ENCODE measurements at regions of chr11 and their contacts with region 1.

Region 1: GRCh38 chr11:95150946-95151684 is 61.5 kb downstream of the ENDOD1 start:
- DNase-seq: peak; percentile 98
- ATAC-seq: peak; percentile 68
- H3K4me3 ChIP-seq: peak overlapping the region; percentile 71
- H3K27ac ChIP-seq: peak overlapping the region; percentile 60
- H3K4me1 ChIP-seq: peaks cover 44% of the 10 kb centered on the region
- H3K27me3 ChIP-seq: no peaks in the 10 kb centered on the region
- CTCF ChIP-seq: peak; percentile 60

Region 2: GRCh38 chr11:94731880-94732601 is 419.1 kb before region 1 on chr11:
- CTCF ChIA-PET with region 1: no interaction called
- POLR2A ChIA-PET with region 1: no interaction called
- intact Hi-C with region 1: no loop called
- DNase-seq: peak; percentile 90
- ATAC-seq: peak; percentile 59
- H3K4me3 ChIP-seq: peak overlapping the region; percentile 4; the same call in 1 of the 2 replicates
- H3K27ac ChIP-seq: peak overlapping the region; percentile 96
- H3K4me1 ChIP-seq: peaks cover 90% of the 10 kb centered on the region
- H3K27me3 ChIP-seq: no peaks in the 10 kb centered on the region
- CTCF ChIP-seq: no peak

Region 3: DNA sequence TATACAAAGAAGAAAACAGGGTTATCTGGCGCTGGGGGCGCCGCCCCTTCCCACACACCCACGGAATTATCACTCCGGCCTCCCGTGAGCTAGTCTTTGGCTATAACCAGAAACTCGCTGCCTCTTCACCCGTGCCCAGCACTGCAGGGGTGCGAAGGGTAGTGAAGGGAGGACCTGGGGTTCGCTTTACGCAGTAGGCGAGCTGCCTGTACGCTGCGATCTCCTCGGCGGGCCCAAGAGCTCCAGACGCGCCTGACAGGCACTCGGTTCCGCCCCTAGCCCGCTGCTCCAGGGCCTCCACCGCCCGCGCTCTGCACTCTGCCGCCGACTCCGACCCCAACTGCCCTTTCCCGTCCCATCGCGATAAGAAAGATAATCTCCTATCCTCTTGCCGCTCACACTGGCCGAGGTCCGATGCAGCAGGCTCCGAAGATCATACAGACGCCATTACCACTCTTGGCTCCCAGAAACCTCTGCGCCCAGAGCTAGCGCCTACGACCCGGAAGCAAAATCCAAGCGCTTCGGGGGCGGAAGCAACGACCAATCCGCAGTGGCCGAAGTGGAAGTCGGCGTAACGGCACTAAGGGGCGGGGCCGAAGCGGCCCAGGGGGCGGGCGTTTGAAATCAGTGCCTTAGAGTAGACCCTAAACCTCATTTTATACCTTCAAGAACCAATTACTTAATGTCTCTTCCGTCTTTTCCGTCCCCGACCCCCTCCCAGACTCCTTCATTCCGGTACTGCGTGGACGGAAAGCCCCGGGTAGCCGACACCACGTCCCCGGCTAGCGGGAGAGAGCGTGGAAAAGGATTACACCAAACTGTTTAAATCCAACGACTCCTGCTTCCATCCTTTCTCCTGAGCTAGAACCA is 177.8 kb before region 1 on chr11 and contains the starts of genes CWC15 and KDM4D:
- CTCF ChIA-PET with region 1: interaction called, 3 read pairs
- POLR2A ChIA-PET with region 1: no interaction called
- intact Hi-C with region 1: loop called (anchors 1 kb)
- DNase-seq: peak; percentile 98
- ATAC-seq: peak; percentile 99
- H3K4me3 ChIP-seq: peak within 1 kb of the TSS; percentile 83
- H3K27ac ChIP-seq: peak within 1 kb of the TSS; percentile 13; the same call in 1 of the 2 replicates
- H3K4me1 ChIP-seq: peaks cover 21% of the 10 kb centered on the region
- H3K27me3 ChIP-seq: no peaks in the 10 kb centered on the region
- CTCF ChIP-seq: no peak
- total RNA-seq, gene CWC15: 56.9 and 63.5 TPM in 2 replicates
- total RNA-seq, gene KDM4D: 2.7 and 4.1 TPM in 2 replicates

Region 4: GRCh38 chr11:95089620-95090542 is 61.2 kb before region 1 on chr11 and contains the start of gene ENDOD1:
- CTCF ChIA-PET with region 1: no interaction called
- POLR2A ChIA-PET with region 1: no interaction called
- intact Hi-C with region 1: loop called (anchors 1 kb)
- DNase-seq: peak; percentile 90
- ATAC-seq: peak; percentile 93
- H3K4me3 ChIP-seq: peak within 1 kb of the TSS; percentile 89
- H3K27ac ChIP-seq: no peak within 1 kb of the TSS
- H3K4me1 ChIP-seq: peaks cover 36% of the 10 kb centered on the region
- H3K27me3 ChIP-seq: no peaks in the 10 kb centered on the region
- CTCF ChIP-seq: peak; percentile 32; the same call in 1 of the 2 replicates
- total RNA-seq, gene ENDOD1: 28.5 and 32.1 TPM in 2 replicates

Region 5: GRCh38 chr11:95108159-95108611 is 42.9 kb before region 1 on chr11:
- CTCF ChIA-PET with region 1: interaction called, 3 read pairs
- POLR2A ChIA-PET with region 1: no interaction called
- intact Hi-C with region 1: loop called (anchors 1 kb)
- DNase-seq: peak; percentile 90
- ATAC-seq: peak; percentile 93
- H3K4me3 ChIP-seq: peak overlapping the region; percentile 58
- H3K27ac ChIP-seq: peak overlapping the region; percentile 84
- H3K4me1 ChIP-seq: peaks cover 30% of the 10 kb centered on the region
- H3K27me3 ChIP-seq: no peaks in the 10 kb centered on the region
- CTCF ChIP-seq: no peak

Region 6: GRCh38 chr11:95705485-95706124 is 554.5 kb after region 1 on chr11:
- CTCF ChIA-PET with region 1: interaction called, 26 read pairs
- POLR2A ChIA-PET with region 1: no interaction called
- intact Hi-C with region 1: loop called (anchors 1 kb)
- DNase-seq: peak; percentile 87
- ATAC-seq: peak; percentile 89
- H3K4me3 ChIP-seq: no peak overlapping the region
- H3K27ac ChIP-seq: no peak overlapping the region
- H3K4me1 ChIP-seq: no peaks in the 10 kb centered on the region
- H3K27me3 ChIP-seq: peaks cover 61% of the 10 kb centered on the region
- CTCF ChIP-seq: peak; percentile 97

Region 7: DNA sequence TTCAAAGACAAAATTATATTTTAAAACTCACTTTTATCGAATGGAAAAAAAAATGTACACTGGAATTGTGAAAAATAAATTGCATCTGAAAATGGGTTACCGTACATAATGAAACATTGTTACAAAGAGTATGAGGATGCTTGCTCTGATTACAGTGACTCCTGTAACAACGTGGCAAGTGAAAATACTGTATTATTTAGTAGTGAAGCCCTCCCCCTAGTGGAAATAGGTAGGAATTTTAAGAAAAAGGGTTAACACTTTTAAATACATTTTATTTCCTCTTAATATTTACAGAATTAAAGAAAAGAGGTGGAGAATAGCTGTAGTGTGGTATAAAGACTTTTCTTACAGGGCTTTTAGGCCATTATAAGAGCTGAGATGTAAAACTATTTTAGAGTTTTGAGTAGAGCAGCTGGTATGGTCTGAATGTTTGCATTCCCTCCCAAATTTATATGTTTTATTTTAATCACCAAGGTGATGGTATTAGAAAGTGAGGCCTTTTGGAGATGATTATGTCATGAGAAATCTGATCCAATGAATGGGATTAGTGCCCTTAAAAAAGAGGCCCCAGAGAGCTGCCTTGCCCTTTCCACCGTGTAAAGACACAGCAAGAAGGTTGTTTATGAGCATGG is 613.3 kb after region 1 on chr11:
- CTCF ChIA-PET with region 1: interaction called, 4 read pairs
- POLR2A ChIA-PET with region 1: no interaction called
- intact Hi-C with region 1: loop called (anchors 1 kb)
- DNase-seq: peak; percentile 76
- ATAC-seq: peak; percentile 85
- H3K4me3 ChIP-seq: no peak overlapping the region
- H3K27ac ChIP-seq: no peak overlapping the region
- H3K4me1 ChIP-seq: no peaks in the 10 kb centered on the region
- H3K27me3 ChIP-seq: peaks cover 23% of the 10 kb centered on the region
- CTCF ChIP-seq: peak; percentile 86

Region 8: DNA sequence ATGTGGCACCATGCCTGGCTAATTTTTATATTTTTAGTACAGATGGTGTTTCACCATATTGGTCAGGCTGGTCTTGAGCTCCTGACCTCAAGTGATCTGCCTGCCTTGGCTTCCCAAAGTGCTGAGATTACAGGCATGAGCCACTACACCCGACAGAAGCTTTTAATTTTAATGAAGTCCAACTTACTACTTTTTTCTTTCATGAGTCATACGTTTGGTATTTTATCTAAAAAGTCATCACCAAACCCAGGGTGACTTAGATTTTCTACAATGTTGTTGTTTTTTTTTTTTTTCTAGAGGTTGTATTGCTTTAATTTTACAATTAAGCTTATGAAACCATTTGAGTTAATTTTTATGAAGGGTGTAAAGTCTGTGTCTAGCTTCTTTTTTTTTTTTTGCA is 1273.6 kb after region 1 on chr11:
- CTCF ChIA-PET with region 1: interaction called, 4 read pairs
- POLR2A ChIA-PET with region 1: no interaction called
- intact Hi-C with region 1: loop called (anchors 1 kb)
- DNase-seq: peak; percentile 61
- ATAC-seq: no peak
- H3K4me3 ChIP-seq: no peak overlapping the region
- H3K27ac ChIP-seq: no peak overlapping the region
- H3K4me1 ChIP-seq: 0 out of 2 replicates have a peak, but pooled peaks cover 7% of the 10 kb centered on the region
- H3K27me3 ChIP-seq: peaks cover 18% of the 10 kb centered on the region
- CTCF ChIP-seq: no peak

Measured in PC-3 (cell line).